Gastrocnemius medialis (tissue), 4 donors: ENCODE measurements at regions of chr2 and their contacts with region 1.

Region 1: DNA sequence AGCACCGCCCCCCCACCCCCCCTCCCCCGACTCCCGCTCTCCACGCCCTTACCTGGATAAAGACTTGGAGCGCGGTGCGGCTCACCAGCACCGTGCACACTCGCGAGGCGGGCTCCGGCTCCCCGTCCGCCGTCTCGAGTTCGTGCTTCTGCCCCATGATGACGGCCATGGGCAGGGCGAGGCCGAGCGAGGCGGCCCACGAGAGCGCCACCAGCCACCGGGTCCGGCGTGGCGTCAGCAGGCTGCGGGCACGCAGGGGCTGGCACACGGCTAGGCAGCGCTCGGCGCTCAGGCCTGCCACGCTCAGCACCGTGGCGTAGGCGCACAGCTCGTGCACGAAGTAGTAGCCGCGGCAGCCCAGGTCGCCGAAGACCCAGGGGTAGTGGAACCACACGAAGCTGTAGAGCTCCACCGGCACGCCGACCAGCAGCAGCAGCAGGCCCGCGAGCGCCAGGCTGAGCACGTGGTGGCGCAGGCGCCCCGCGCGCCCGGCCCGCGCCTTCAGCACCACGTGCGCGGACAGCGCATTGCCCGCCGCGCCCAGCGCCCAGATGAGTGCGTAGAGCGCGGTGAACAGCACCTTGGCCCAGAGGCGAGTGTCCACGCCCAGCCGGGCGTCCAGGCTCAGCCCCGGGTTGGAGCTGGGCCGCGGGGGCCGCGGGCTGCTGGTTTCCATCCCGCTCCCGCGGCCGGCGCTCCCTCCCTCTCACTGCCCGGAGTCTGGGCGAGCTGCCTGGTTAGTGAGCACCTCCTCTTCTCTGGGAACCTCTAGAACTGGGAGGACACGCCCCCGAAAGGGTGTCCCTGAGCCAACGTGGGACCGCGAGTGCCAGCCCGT is at the start of gene NTSR2:
- DNase-seq: peak; percentile 50 to 63
- ATAC-seq: peak; percentile 86 to 90
- H3K4me3 ChIP-seq: peak within 1 kb of the TSS; percentile 5 to 41 (median 23)
- H3K27ac ChIP-seq: peak within 1 kb of the TSS in 3 of 4 donors; percentile 33 to 59 (median 35)
- H3K4me1 ChIP-seq: peaks cover 0 to 3% of the 10 kb centered on the region in 2 donors
- H3K27me3 ChIP-seq: no peaks in the 10 kb centered on the region
- CTCF ChIP-seq: peak in 3 of 5 experiments; percentile 6 to 41 (median 14)
- POLR2A ChIP-seq: peak; percentile 22 to 23
- total RNA-seq, gene NTSR2: 0.62 to 0.85 TPM in 2 of 4 donors, not detected in the others

Region 2: DNA sequence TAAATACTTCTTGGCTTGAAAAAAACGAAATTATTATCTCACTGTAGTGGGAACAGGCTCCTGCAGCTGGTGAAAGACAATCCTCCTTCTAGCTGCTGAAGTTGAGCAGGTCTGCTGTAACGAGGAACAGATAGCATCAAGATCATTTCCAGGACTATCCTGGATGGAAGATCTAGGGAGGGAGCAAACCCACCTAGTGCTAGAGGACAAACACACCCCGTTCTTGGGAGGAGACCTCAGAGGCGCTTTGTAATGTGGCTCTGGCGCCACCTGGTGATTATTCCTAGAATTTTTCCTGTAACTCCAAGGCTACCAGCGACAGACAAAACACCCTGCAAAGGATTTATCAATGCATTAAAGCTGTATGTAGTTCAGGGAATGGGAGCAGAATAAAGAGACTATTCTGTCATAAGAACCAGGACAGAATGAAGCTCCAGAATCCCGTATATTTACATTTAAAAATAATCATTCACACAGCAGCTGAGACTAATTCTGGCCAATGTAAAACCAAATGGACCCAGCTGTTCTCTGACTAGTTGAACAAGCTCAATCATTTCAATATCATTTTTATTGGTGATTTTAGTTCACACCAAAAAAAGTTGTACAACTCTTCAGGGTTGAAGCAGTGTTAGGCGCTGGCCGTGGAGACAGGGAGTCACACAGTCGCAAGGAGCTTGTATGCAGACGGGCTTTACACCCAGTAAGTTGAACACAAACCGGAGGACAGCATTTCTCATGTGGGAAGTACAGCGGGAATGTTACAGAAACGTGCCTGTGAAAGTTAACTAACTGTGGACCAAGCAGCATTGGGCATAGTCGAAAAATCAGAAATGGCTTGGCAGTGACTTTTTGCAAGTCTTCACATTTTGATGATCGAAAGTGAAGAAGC is 1337.4 kb after region 1 on chr2:
- in situ Hi-C with region 1: loop called in 1 of 4 experiments (anchors 25 kb)
- intact Hi-C with region 1: no loop called
- DNase-seq: peak; percentile 13 to 21
- ATAC-seq: peak; percentile 71 to 80
- H3K4me3 ChIP-seq: peak overlapping the region in 2 of 4 donors; percentile 19 to 27
- H3K27ac ChIP-seq: peak overlapping the region in 3 of 4 donors; percentile 11 to 38 (median 17)
- H3K4me1 ChIP-seq: peaks cover 0 to 4% of the 10 kb centered on the region in 2 donors
- H3K27me3 ChIP-seq: no peaks in the 10 kb centered on the region
- CTCF ChIP-seq: peak; percentile 62 to 91 (median 72)
- POLR2A ChIP-seq: no peak